ENCODE measurements at regions of chr15 and their contacts with region 1.

Region 1: GRCh38 chr15:89119489-89120123 is 31.4 kb downstream of the ABHD2 start:
- DNase-seq: peak; percentile 85
- ATAC-seq: peak; percentile 67
- H3K4me3 ChIP-seq: peak overlapping the region; percentile 42
- H3K27ac ChIP-seq: peak overlapping the region; percentile 99
- H3K4me1 ChIP-seq: peaks cover 72% of the 10 kb centered on the region
- H3K27me3 ChIP-seq: no peaks in the 10 kb centered on the region
- CTCF ChIP-seq: no peak

Region 2: GRCh38 chr15:89101302-89102191 is 18.1 kb before region 1 on chr15:
- CTCF ChIA-PET with region 1: no interaction called
- POLR2A ChIA-PET with region 1: no interaction called
- intact Hi-C with region 1: loop called (anchors 1 kb)
- DNase-seq: peak; percentile 95
- ATAC-seq: peak; percentile 79
- H3K4me3 ChIP-seq: peak overlapping the region; percentile 49
- H3K27ac ChIP-seq: peak overlapping the region; percentile 98
- H3K4me1 ChIP-seq: peaks cover 85% of the 10 kb centered on the region
- H3K27me3 ChIP-seq: no peaks in the 10 kb centered on the region
- CTCF ChIP-seq: no peak

Region 3: DNA sequence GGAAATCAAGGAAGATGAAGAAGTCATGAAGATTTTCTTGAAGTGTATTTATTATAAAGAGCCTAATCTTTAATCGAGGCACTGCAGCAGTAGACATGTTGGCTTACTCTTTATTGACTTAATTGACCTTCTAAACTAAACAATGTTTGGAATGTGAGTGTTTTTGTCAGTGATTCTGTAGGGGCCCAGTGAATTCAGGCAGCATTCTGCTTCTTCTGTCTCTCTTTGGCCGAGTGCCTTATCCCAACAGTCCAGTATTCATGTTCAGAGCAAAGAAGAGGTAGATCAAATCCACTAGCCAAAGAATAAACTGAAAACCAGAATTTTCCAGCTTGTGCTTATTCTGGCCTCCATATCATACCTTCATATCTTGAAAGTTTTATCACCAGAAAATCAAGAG is 46.1 kb after region 1 on chr15:
- CTCF ChIA-PET with region 1: no interaction called
- POLR2A ChIA-PET with region 1: interaction called, 7 read pairs
- intact Hi-C with region 1: loop called (anchors 1 kb)
- DNase-seq: no peak
- ATAC-seq: no peak
- H3K4me3 ChIP-seq: no peak overlapping the region
- H3K27ac ChIP-seq: peak overlapping the region; percentile 98; the same call in 1 of the 2 replicates
- H3K4me1 ChIP-seq: peaks cover 41% of the 10 kb centered on the region
- H3K27me3 ChIP-seq: no peaks in the 10 kb centered on the region
- CTCF ChIP-seq: no peak

Measured in PC-3 (cell line).